Caco-2 (cell line): ENCODE measurements at regions of chr12 and their contacts with region 1.

Region 1: DNA sequence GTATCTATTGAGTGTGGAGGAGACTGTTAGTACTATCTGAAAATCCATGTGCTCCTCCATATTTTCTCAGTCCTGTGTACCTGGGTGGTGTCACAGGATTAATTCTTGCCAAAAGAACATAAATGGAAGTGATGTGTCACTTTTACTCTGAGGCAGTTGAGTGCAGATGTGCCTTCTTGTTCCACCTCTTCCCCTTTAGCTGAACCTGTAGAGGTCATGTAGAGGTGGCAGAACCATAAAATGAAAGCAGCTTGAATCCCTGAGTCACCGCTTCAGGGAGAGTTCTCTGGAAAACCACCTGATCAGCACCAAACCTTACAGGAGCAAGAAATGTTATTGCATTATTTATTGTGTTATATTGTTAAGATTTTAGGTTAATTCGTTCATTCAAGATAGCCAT is 14.7 kb upstream of the SLC25A3 start:
- DNase-seq: no peak
- H3K4me3 ChIP-seq: no peak overlapping the region
- H3K4me3 Mint-ChIP-seq: no peak overlapping the region
- H3K27ac Mint-ChIP-seq: no peak overlapping the region
- H3K4me1 ChIP-seq: peaks cover 39% of the 10 kb centered on the region
- H3K4me1 Mint-ChIP-seq: peaks cover 14% of the 10 kb centered on the region
- H3K27me3 ChIP-seq: no peaks in the 10 kb centered on the region
- H3K27me3 Mint-ChIP-seq: no peaks in the 10 kb centered on the region
- CTCF ChIP-seq: no peak

Region 2: GRCh38 chr12:98332642-98333041 is 246.2 kb before region 1 on chr12:
- CTCF ChIA-PET with region 1: no interaction called
- POLR2A ChIA-PET with region 1: no interaction called
- intact Hi-C with region 1: no loop called
- DNase-seq: no peak
- H3K4me3 ChIP-seq: no peak overlapping the region
- H3K4me3 Mint-ChIP-seq: no peak overlapping the region
- H3K27ac Mint-ChIP-seq: no peak overlapping the region
- H3K4me1 ChIP-seq: no peaks in the 10 kb centered on the region
- H3K4me1 Mint-ChIP-seq: peaks cover 7% of the 10 kb centered on the region
- H3K27me3 ChIP-seq: no peaks in the 10 kb centered on the region
- H3K27me3 Mint-ChIP-seq: peaks cover 3% of the 10 kb centered on the region
- CTCF ChIP-seq: no peak

Region 3: GRCh38 chr12:98503592-98504367 is 75.0 kb before region 1 on chr12:
- CTCF ChIA-PET with region 1: no interaction called
- POLR2A ChIA-PET with region 1: no interaction called
- intact Hi-C with region 1: no loop called
- DNase-seq: peak; percentile 93 to 94
- H3K4me3 ChIP-seq: peak overlapping the region; percentile 71
- H3K4me3 Mint-ChIP-seq: peak overlapping the region; percentile 81
- H3K27ac Mint-ChIP-seq: peak overlapping the region; percentile 99
- H3K4me1 ChIP-seq: peaks cover 23% of the 10 kb centered on the region
- H3K4me1 Mint-ChIP-seq: peaks cover 31% of the 10 kb centered on the region
- H3K27me3 ChIP-seq: no peaks in the 10 kb centered on the region
- H3K27me3 Mint-ChIP-seq: peaks cover 10% of the 10 kb centered on the region
- CTCF ChIP-seq: no peak

Region 4: GRCh38 chr12:98612696-98613334 is 34.0 kb after region 1 on chr12:
- CTCF ChIA-PET with region 1: no interaction called
- POLR2A ChIA-PET with region 1: no interaction called
- intact Hi-C with region 1: loop called (anchors 1 kb)
- DNase-seq: no peak
- H3K4me3 ChIP-seq: no peak overlapping the region
- H3K4me3 Mint-ChIP-seq: no peak overlapping the region
- H3K27ac Mint-ChIP-seq: no peak overlapping the region
- H3K4me1 ChIP-seq: no peaks in the 10 kb centered on the region
- H3K4me1 Mint-ChIP-seq: peaks cover 6% of the 10 kb centered on the region
- H3K27me3 ChIP-seq: no peaks in the 10 kb centered on the region
- H3K27me3 Mint-ChIP-seq: no peaks in the 10 kb centered on the region
- CTCF ChIP-seq: no peak